Caco-2 (cell line): ENCODE measurements at regions of chr11 and their contacts with region 1.

Region 1: DNA sequence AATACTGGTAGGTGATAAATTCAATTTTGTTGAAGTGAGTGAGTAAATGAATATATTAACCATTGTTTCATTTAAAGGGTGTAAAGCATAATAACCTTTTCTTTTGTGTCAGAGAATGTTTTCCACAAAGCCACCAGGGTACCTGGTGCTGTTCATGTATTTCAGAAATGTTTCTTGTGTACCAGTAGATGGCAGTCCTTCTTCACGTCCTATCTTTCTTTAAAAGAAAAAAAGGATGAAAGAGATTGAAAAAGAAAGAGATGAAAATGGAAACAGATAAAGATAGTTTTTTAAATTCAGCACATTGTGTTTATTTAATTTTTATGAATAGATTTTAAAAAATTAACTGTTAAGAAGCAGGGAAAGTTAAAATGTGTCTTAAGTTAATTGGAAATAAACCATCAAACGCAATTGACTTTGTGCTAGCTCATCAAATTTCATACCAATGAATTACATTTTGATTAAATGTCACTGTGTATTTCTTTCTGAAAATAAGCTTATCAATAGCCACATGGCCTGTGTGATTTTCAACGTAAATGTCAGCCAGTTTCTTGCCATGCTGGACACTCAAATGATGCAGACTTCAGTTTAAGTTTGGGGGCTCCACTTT is 65.5 kb upstream of the CHORDC1 start:
- DNase-seq: peak in 1 of 2 experiments; percentile 46
- H3K4me3 ChIP-seq: no peak overlapping the region
- H3K4me3 Mint-ChIP-seq: no peak overlapping the region
- H3K27ac Mint-ChIP-seq: no peak overlapping the region
- H3K4me1 ChIP-seq: peaks cover 17% of the 10 kb centered on the region
- H3K4me1 Mint-ChIP-seq: no peaks in the 10 kb centered on the region
- H3K27me3 ChIP-seq: no peaks in the 10 kb centered on the region; the same call in 1 of the 2 replicates
- H3K27me3 Mint-ChIP-seq: no peaks in the 10 kb centered on the region
- CTCF ChIP-seq: peak; percentile 86 to 90

Region 2: DNA sequence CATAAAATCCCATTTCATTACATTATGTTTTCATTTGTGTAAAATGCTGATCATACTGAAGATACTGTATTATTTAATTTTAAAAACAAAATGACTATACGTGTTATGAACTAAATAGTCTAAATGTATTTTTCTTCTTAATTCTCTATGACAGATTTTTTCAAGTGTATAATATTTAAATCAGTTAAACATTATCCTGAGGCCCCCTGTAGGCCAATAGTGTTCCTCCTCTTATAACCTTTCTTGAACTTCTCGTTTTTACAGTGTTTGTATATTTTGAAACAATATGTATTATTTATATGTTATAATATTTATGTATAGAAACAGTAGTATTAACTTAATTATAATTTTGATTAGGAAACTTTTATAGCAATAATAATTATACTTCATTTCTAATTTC is 85.7 kb after region 1 on chr11:
- CTCF ChIA-PET with region 1: no interaction called
- POLR2A ChIA-PET with region 1: no interaction called
- intact Hi-C with region 1: no loop called
- DNase-seq: no peak
- H3K4me3 ChIP-seq: no peak overlapping the region
- H3K4me3 Mint-ChIP-seq: no peak overlapping the region
- H3K27ac Mint-ChIP-seq: no peak overlapping the region
- H3K4me1 ChIP-seq: no peaks in the 10 kb centered on the region
- H3K4me1 Mint-ChIP-seq: no peaks in the 10 kb centered on the region
- H3K27me3 ChIP-seq: no peaks in the 10 kb centered on the region
- H3K27me3 Mint-ChIP-seq: no peaks in the 10 kb centered on the region
- CTCF ChIP-seq: peak in 1 of 2 experiments; percentile 16

Region 3: GRCh38 chr11:90542092-90542491 is 253.8 kb after region 1 on chr11:
- CTCF ChIA-PET with region 1: interaction called, 5 read pairs
- POLR2A ChIA-PET with region 1: no interaction called
- intact Hi-C with region 1: loop called (anchors 1 kb)
- DNase-seq: no peak
- H3K4me3 ChIP-seq: no peak overlapping the region
- H3K4me3 Mint-ChIP-seq: no peak overlapping the region
- H3K27ac Mint-ChIP-seq: no peak overlapping the region
- H3K4me1 ChIP-seq: no peaks in the 10 kb centered on the region
- H3K4me1 Mint-ChIP-seq: no peaks in the 10 kb centered on the region
- H3K27me3 ChIP-seq: no peaks in the 10 kb centered on the region
- H3K27me3 Mint-ChIP-seq: peaks cover 8% of the 10 kb centered on the region
- CTCF ChIP-seq: peak; percentile 8 to 19

Region 4: DNA sequence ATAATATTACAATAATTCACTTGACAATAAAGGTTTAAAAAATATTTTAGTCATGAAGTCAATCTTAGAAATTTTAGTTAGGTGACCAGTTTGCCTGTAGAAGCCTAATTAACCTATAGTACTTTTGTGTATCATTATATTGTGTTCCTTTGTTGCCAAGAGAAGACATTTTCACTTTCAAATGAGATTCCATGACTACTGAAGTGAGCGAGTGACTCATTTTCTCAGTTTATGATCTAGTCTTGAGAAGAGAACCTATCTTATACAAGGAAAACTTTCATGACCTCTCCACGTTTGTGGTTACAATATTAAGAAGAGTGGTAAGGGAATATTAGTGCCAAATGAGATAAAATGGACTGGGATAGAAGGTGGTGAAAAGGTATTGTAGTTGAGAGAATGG is 358.4 kb after region 1 on chr11:
- CTCF ChIA-PET with region 1: no interaction called
- POLR2A ChIA-PET with region 1: no interaction called
- intact Hi-C with region 1: loop called (anchors 5 kb)
- DNase-seq: no peak
- H3K4me3 ChIP-seq: no peak overlapping the region
- H3K4me3 Mint-ChIP-seq: no peak overlapping the region
- H3K27ac Mint-ChIP-seq: no peak overlapping the region
- H3K4me1 ChIP-seq: no peaks in the 10 kb centered on the region
- H3K4me1 Mint-ChIP-seq: no peaks in the 10 kb centered on the region
- H3K27me3 ChIP-seq: no peaks in the 10 kb centered on the region
- H3K27me3 Mint-ChIP-seq: peaks cover 3% of the 10 kb centered on the region
- CTCF ChIP-seq: no peak